Activated CD4-positive, alpha-beta memory T cell treated with anti-CD3 and anti-CD28 coated beads, Interleukin-2, amount 10 ng/mL, durations not matched to agents 7 days and 5 days (primary cell): ENCODE measurements at regions of chr3 and their contacts with region 1.

Region 1: GRCh38 chr3:184229394-184230080 is at the start of gene VWA5B2:
- DNase-seq: peak; percentile 57
- H3K4me3 Mint-ChIP-seq: peak within 1 kb of the TSS; percentile 51
- H3K27ac Mint-ChIP-seq: no peak within 1 kb of the TSS
- H3K4me1 Mint-ChIP-seq: peaks cover 13% of the 10 kb centered on the region
- H3K27me3 Mint-ChIP-seq: peaks cover 57% of the 10 kb centered on the region
- total RNA-seq, gene VWA5B2: not detected

Region 2: GRCh38 chr3:183895296-183895695 is 334.2 kb before region 1 on chr3:
- CTCF ChIA-PET with region 1: interaction called, 10 read pairs
- POLR2A ChIA-PET with region 1: no interaction called
- DNase-seq: peak; percentile 40
- H3K4me3 Mint-ChIP-seq: no peak overlapping the region
- H3K27ac Mint-ChIP-seq: no peak overlapping the region
- H3K4me1 Mint-ChIP-seq: peaks cover 3% of the 10 kb centered on the region
- H3K27me3 Mint-ChIP-seq: peaks cover 12% of the 10 kb centered on the region

Region 3: DNA sequence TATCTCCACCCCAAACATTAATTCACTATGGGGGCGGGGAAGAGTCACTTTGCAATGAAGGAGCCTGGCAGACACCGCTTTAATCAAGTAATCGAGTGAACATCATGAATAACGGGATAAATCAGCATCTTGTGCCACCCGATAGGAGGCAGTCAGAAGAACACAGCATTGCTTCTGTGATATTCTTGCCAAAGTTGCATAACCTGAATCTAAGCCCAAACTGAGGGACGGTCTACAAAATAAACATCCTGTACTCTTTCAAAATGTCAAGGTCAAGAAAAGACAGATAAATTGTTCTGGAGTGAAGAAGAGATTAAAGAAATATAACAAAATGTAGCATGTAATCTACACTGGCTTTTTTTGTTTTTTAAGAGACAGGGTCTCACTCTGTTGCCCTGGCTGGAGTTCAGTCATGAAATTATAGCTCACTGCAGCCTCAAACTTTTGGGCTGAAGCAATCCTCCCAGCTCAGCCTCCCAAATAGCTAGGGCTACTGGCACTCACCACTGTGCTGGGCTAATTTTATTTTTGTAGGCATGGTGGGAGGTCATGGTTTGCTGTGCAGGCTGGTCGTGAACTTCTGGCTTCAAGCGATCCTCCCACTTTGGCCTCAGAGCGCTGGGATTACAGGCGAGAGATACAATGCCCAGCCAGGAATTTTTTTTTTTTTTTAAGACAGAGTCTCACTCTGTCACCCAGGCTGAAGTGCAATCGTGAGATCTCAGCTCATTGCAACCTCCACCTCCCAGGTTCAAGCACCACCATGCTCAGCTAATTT is 20.2 kb before region 1 on chr3:
- CTCF ChIA-PET with region 1: interaction called, 13 read pairs
- POLR2A ChIA-PET with region 1: no interaction called
- DNase-seq: no peak
- H3K4me3 Mint-ChIP-seq: no peak overlapping the region
- H3K27ac Mint-ChIP-seq: no peak overlapping the region
- H3K4me1 Mint-ChIP-seq: no peaks in the 10 kb centered on the region
- H3K27me3 Mint-ChIP-seq: peaks cover 21% of the 10 kb centered on the region

Region 4: GRCh38 chr3:184218814-184219213 is 10.7 kb before region 1 on chr3:
- CTCF ChIA-PET with region 1: interaction called, 13 read pairs
- POLR2A ChIA-PET with region 1: no interaction called
- DNase-seq: no peak
- H3K4me3 Mint-ChIP-seq: no peak overlapping the region
- H3K27ac Mint-ChIP-seq: no peak overlapping the region
- H3K4me1 Mint-ChIP-seq: no peaks in the 10 kb centered on the region
- H3K27me3 Mint-ChIP-seq: peaks cover 7% of the 10 kb centered on the region

Region 5: DNA sequence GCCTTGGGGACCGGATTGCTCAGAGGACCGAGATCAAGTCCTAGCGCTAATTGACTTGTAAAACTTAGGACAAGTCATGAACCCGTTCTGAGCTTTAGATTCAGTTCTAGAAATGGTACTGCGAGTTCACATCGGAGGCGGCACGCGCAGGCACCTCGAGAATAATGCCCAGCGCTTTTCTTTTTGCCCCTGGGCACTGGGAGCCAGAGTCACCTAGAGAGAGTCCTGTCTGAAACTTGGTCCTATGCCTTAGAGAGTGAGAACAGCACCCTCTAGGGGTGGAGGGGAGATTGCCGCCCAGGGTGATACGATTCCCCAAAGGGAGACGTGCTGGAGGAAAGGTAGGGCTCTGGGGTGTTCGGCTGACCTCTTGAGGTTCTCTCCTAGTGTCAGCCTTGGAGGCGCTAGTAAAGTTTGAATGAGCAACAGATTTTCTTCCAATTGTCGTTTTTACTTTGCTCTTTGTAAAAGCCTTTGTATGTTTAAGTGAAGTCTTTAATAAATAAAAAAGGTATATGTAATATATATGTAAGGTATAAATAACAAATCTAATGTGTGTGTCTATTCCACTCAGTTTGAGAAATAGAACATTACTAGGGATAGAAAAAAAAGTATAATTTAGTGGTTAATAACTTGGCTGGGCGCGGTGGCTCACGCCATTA is 20.8 kb after region 1 on chr3:
- CTCF ChIA-PET with region 1: interaction called, 24 read pairs
- POLR2A ChIA-PET with region 1: interaction called, 9 read pairs
- DNase-seq: peak; percentile 90
- H3K4me3 Mint-ChIP-seq: peak overlapping the region; percentile 83
- H3K27ac Mint-ChIP-seq: peak overlapping the region; percentile 89
- H3K4me1 Mint-ChIP-seq: peaks cover 15% of the 10 kb centered on the region
- H3K27me3 Mint-ChIP-seq: no peaks in the 10 kb centered on the region

Region 6: DNA sequence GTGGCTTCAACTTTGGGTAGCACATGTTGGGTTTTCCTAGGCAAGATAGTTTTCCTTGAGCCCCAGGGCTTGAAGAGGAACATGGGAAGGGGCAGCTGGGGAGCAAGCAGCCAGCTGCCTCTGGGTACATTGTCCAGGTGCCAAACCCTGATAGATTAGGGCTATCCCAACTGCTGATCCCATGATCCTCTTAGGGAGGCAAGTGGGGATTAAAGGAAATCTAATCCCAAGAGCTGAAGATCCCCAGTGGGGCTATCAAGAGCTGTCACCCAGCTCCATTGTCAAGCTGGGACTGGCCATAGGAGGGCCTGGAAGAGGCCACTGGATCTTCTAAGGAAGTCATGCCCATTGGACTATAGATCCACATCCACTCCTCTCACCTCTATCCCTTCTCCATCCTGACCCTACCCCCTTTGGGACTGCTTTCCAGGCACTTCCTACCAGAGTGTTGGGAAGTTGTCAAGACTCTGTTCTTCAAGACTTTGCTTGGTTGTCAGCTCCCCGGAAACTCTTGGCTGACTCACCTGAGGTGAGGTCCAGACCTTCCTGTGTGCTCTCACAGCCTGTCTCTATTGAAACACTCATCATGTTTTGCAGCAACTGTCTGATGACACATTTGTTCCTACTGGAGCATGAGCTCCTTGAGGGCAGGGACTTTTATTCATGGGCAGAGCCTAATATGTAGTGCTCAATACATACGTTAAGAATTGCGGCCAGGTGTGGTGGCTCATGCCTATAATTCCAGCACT is 25.9 kb after region 1 on chr3:
- CTCF ChIA-PET with region 1: interaction called, 24 read pairs
- POLR2A ChIA-PET with region 1: interaction called, 9 read pairs
- DNase-seq: no peak
- H3K4me3 Mint-ChIP-seq: no peak overlapping the region
- H3K27ac Mint-ChIP-seq: no peak overlapping the region
- H3K4me1 Mint-ChIP-seq: peaks cover 10% of the 10 kb centered on the region
- H3K27me3 Mint-ChIP-seq: peaks cover 14% of the 10 kb centered on the region

Region 7: DNA sequence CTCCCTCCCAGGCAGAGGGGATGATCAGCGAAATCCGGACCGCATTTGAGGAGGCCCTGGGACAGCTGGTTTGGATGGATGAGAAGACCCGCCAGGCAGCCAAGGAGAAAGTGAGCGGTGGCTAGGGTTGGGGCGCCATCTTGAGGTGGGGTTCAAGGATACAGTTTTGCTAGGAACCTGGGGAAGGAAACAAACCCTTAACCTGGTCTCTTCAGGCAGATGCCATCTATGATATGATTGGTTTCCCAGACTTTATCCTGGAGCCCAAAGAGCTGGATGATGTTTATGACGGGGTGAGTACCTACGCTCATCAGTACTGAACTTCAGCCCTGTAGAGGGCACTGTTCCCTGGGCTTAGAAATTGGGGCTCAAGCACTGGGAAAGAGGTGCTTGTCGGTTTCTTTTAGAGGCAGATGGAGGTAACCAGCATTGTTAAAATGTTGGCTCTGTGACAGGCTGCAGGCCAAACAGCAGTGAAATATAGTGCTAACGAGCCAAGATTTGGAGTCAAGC is 59.9 kb after region 1 on chr3:
- CTCF ChIA-PET with region 1: interaction called, 53 read pairs
- POLR2A ChIA-PET with region 1: interaction called, 3 read pairs
- DNase-seq: peak; percentile 73
- H3K4me3 Mint-ChIP-seq: no peak overlapping the region
- H3K27ac Mint-ChIP-seq: no peak overlapping the region
- H3K4me1 Mint-ChIP-seq: no peaks in the 10 kb centered on the region
- H3K27me3 Mint-ChIP-seq: peaks cover 11% of the 10 kb centered on the region